ENCODE measurements at regions of chr18 and their contacts with region 1.

Region 1: GRCh38 chr18:51513541-51513940 is 316.1 kb upstream of the MEX3C start:
- DNase-seq: peak; percentile 85
- H3K4me3 ChIP-seq: no peak overlapping the region
- H3K27ac ChIP-seq: peak overlapping the region; percentile 74
- H3K4me1 ChIP-seq: peaks cover 19% of the 10 kb centered on the region
- H3K27me3 ChIP-seq: no peaks in the 10 kb centered on the region
- CTCF ChIP-seq: no peak

Region 2: GRCh38 chr18:51447351-51448342 is 65.9 kb before region 1 on chr18:
- CTCF ChIA-PET with region 1: no interaction called
- dilution Hi-C with region 1: no loop called
- in situ Hi-C with region 1: no loop called
- intact Hi-C with region 1: loop called (anchors 5 kb)
- DNase-seq: peak; percentile 62
- H3K4me3 ChIP-seq: no peak overlapping the region
- H3K27ac ChIP-seq: no peak overlapping the region
- H3K4me1 ChIP-seq: peaks cover 10% of the 10 kb centered on the region
- H3K27me3 ChIP-seq: no peaks in the 10 kb centered on the region
- CTCF ChIP-seq: no peak

Region 3: DNA sequence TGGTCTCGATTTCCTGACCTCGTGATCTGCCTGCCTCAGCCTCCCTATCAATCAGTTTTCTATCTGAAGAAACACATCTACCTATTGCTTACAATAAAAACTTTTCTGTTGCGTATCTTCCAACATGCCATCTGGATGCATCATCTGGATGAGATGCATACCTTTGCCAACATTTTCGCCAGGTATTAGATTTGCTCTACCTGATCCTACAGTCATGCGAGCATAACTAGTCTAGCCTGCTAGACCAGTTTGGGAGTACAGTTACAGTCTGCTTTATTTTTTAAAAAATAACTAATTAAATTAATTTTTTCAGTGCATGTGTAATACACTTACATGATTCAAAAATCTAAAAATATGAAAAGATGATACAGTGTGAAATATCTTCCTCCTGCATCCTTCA is 18.0 kb after region 1 on chr18:
- CTCF ChIA-PET with region 1: no interaction called
- dilution Hi-C with region 1: no loop called
- in situ Hi-C with region 1: no loop called
- intact Hi-C with region 1: loop called (anchors 1 kb)
- DNase-seq: peak; percentile 93
- H3K4me3 ChIP-seq: no peak overlapping the region
- H3K27ac ChIP-seq: peak overlapping the region; percentile 51
- H3K4me1 ChIP-seq: peaks cover 36% of the 10 kb centered on the region
- H3K27me3 ChIP-seq: no peaks in the 10 kb centered on the region
- CTCF ChIP-seq: no peak